ENCODE measurements at regions of chr14 and their contacts with region 1.

Region 1: GRCh38 chr14:99604283-99604765 is 317 bp upstream of the CCDC85C start:
- DNase-seq: peak; percentile 93 to 99 (median 97)
- ATAC-seq: peak; percentile 95
- H3K4me3 ChIP-seq: peak overlapping the region; percentile 95
- H3K4me3 Mint-ChIP-seq: peak overlapping the region; percentile 83 to 97 (median 91)
- H3K27ac ChIP-seq: peak overlapping the region; percentile 80
- H3K27ac Mint-ChIP-seq: peak overlapping the region; percentile 62 to 97 (median 86)
- H3K4me1 ChIP-seq: peaks cover 16 to 19% of the 10 kb centered on the region in 2 donors
- H3K4me1 Mint-ChIP-seq: peaks cover 7 to 40% (median 38%) of the 10 kb centered on the region in 7 donors
- H3K27me3 ChIP-seq: no peaks in the 10 kb centered on the region
- H3K27me3 Mint-ChIP-seq: peaks cover 0 to 13% (median 0%) of the 10 kb centered on the region in 5 donors

Region 2: DNA sequence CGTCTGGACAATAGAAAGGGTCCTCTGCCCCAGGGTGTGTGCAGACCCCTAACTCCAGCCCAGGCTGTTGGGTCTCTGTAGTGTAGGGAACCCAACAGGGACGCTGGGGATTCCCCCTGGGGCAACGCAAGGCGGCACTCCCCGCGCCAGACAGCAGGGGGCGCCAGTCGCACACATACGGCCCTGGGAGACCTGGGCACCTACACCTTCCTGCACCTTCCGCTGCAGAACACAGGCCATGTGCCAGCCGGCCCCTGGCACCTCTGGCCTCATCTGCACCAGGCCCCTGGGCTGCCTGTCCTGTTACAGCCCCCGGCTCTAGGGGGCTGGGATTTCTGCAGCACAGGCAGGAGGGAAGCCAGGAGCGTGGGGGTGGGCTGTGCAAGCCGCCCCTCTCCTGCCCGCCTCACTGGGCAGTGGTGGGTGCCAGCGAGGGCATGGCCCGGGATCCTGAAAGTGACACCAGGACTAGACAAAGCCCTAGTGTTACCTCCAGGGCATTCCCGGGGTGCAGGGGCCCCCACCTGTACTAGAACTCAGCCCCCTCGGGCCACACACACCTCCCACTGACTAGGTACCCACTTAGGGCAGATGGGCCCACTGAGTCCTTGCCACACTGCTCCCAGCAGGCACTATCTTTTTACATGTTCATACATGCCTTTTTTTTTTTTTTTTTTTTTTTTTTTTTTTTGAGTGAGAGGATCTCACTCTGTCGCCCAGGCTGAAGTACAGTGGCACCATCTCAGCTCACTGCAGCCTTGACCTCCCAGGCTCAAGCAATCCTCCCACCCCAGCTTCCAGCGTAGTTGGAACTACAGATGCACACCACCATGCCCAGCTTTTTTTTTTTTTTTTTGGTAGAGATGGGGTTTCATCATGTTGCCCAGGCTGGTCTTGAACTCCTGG is 85.6 kb before region 1 on chr14:
- CTCF ChIA-PET with region 1: interaction called, 7 read pairs
- POLR2A ChIA-PET with region 1: no interaction called
- intact Hi-C with region 1: loop called in 1 of 2 experiments (anchors 1 kb)
- DNase-seq: peak; percentile 69 to 91 (median 81)
- ATAC-seq: peak; percentile 84
- H3K4me3 ChIP-seq: no peak overlapping the region
- H3K4me3 Mint-ChIP-seq: no peak overlapping the region
- H3K27ac ChIP-seq: no peak overlapping the region
- H3K27ac Mint-ChIP-seq: peak overlapping the region in 1 of 9 donors; percentile 5
- H3K4me1 ChIP-seq: no peaks in the 10 kb centered on the region
- H3K4me1 Mint-ChIP-seq: no peaks in the 10 kb centered on the region
- H3K27me3 ChIP-seq: no peaks in the 10 kb centered on the region
- H3K27me3 Mint-ChIP-seq: no peaks in the 10 kb centered on the region

Region 3: DNA sequence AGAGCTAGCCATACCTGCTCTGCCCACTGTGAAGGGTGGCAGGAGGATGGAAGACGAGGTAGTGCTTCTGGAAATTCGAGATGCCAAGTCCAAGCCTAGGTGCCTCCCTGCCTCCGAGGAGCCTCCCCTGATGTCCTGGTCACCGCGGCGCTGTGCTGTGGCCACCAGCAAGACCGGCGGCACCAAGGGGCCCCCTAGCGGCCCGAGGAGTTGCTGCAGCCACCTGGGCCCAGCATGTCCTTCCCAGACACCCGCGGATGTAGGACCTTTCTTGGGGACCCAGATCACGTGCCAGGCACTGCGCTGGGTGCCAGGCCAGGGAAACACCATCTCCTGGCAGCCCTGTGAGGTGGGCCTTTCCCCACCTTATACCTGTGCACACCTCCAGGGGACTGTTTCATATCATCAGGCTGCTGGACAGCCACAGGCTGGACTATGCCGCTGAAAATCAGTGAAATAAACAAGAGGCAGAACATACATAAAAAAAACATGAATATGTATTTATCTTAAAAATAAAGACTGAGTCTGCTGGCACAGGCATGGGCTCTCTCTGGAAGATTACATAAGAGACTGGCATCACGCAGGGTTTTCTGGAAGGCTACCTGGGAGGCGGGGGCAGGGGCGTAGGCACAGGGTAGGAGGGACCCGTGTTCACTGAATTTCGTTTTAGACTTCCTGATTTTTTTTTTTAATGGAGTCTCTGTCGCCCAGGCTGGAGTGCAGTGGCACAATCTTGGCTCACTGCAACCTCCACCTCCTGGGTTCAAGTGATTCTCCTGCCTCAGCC is 24.7 kb after region 1 on chr14:
- CTCF ChIA-PET with region 1: interaction called, 4 read pairs
- POLR2A ChIA-PET with region 1: no interaction called
- intact Hi-C with region 1: loop called in 1 of 2 experiments (anchors 2 kb)
- DNase-seq: peak; percentile 30 to 66 (median 45)
- ATAC-seq: peak; percentile 79
- H3K4me3 ChIP-seq: no peak overlapping the region
- H3K4me3 Mint-ChIP-seq: no peak overlapping the region
- H3K27ac ChIP-seq: no peak overlapping the region
- H3K27ac Mint-ChIP-seq: peak overlapping the region in 1 of 9 donors; percentile 51
- H3K4me1 ChIP-seq: no peaks in the 10 kb centered on the region
- H3K4me1 Mint-ChIP-seq: peaks cover 0 to 4% (median 2%) of the 10 kb centered on the region in 7 donors
- H3K27me3 ChIP-seq: peaks cover 0 to 4% of the 10 kb centered on the region in 2 donors
- H3K27me3 Mint-ChIP-seq: peaks cover 2 to 28% (median 9%) of the 10 kb centered on the region in 5 donors

Region 4: DNA sequence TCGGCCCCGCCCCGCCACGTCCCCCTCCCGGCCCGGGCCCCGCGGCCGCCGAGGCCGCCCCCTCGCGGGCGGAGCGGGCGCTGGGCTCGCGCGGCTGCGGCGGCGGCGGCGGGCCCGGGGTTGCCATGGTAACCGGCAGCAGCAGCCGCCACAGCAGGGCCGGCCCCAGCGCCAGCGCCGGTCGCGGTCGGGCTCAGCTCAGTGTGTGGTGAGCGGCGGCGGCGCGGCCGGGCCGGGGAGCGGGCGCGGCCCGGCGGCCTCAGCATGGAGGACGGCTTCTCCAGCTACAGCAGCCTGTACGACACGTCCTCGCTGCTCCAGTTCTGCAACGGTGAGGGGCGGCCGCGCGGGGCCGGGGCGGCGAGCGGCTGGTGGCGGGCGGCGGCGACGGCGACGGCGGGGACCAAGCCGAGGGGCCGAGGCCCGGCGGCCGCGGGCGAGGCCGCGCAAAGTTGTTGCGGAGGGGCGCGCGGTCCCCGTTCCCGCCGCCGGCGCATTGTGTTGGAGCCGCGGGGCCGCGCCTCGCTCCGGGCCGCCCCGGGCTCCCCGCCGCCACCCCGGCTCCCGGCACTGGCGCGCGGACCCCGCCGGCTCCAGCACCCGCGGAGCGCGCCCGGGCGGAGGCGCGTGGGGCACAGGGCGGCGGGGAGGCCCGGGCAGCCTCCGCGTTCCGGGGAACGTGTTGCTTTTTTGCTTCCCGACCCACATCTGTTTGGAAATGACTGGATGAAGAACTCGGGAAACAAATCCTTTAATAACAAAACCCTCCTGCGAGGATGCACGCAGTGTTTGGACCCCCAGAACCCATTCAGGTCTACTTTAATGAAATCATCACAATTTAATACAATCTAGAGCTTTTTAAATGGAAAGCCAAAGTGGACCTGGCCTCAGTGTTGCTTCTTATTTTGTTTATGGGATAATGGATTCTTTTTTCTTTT is 189.2 kb after region 1 on chr14 and contains the start of gene EML1:
- CTCF ChIA-PET with region 1: no interaction called
- POLR2A ChIA-PET with region 1: no interaction called
- intact Hi-C with region 1: loop called in 1 of 2 experiments (anchors 1 kb)
- DNase-seq: peak; percentile 55 to 84 (median 72)
- ATAC-seq: peak; percentile 88
- H3K4me3 ChIP-seq: peak within 1 kb of the TSS; percentile 38
- H3K4me3 Mint-ChIP-seq: peak within 1 kb of the TSS; percentile 69 to 85 (median 79)
- H3K27ac ChIP-seq: no peak within 1 kb of the TSS
- H3K27ac Mint-ChIP-seq: peak within 1 kb of the TSS in 7 of 9 donors; percentile 12 to 69 (median 48)
- H3K4me1 ChIP-seq: peaks cover 0 to 4% of the 10 kb centered on the region in 2 donors
- H3K4me1 Mint-ChIP-seq: peaks cover 5 to 34% (median 21%) of the 10 kb centered on the region in 7 donors
- H3K27me3 ChIP-seq: peaks cover 0 to 5% of the 10 kb centered on the region in 2 donors
- H3K27me3 Mint-ChIP-seq: peaks cover 0 to 66% (median 27%) of the 10 kb centered on the region in 5 donors
- total RNA-seq, gene EML1: not detected

Region 5: GRCh38 chr14:100221533-100222223 is 617.4 kb after region 1 on chr14:
- CTCF ChIA-PET with region 1: no interaction called
- POLR2A ChIA-PET with region 1: no interaction called
- intact Hi-C with region 1: loop called in 1 of 2 experiments (anchors 10 kb)
- DNase-seq: peak; percentile 22 to 81 (median 74)
- ATAC-seq: peak; percentile 95
- H3K4me3 ChIP-seq: peak overlapping the region; percentile 88
- H3K4me3 Mint-ChIP-seq: no peak overlapping the region
- H3K27ac ChIP-seq: peak overlapping the region; percentile 77
- H3K27ac Mint-ChIP-seq: no peak overlapping the region
- H3K4me1 ChIP-seq: peaks cover 31 to 36% of the 10 kb centered on the region in 2 donors
- H3K4me1 Mint-ChIP-seq: peaks cover 11 to 20% (median 13%) of the 10 kb centered on the region in 7 donors
- H3K27me3 ChIP-seq: no peaks in the 10 kb centered on the region
- H3K27me3 Mint-ChIP-seq: no peaks in the 10 kb centered on the region

Region 6: GRCh38 chr14:101337053-101337452 is 1732.7 kb after region 1 on chr14:
- CTCF ChIA-PET with region 1: no interaction called
- POLR2A ChIA-PET with region 1: no interaction called
- intact Hi-C with region 1: no loop called
- DNase-seq: no peak
- ATAC-seq: no peak
- H3K4me3 ChIP-seq: no peak overlapping the region
- H3K4me3 Mint-ChIP-seq: no peak overlapping the region
- H3K27ac ChIP-seq: no peak overlapping the region
- H3K27ac Mint-ChIP-seq: no peak overlapping the region
- H3K4me1 ChIP-seq: no peaks in the 10 kb centered on the region
- H3K4me1 Mint-ChIP-seq: no peaks in the 10 kb centered on the region
- H3K27me3 ChIP-seq: no peaks in the 10 kb centered on the region
- H3K27me3 Mint-ChIP-seq: peaks cover 10 to 56% (median 50%) of the 10 kb centered on the region in 5 donors